GM12878 (cell line): ENCODE measurements at regions of chr13 and their contacts with region 1.

Region 1: GRCh38 chr13:113557013-113557412 is 27.5 kb upstream of the TFDP1 start:
- DNase-seq: no peak
- ATAC-seq: no peak
- H3K4me3 ChIP-seq: no peak overlapping the region
- H3K27ac ChIP-seq: no peak overlapping the region
- H3K4me1 ChIP-seq: no peaks in the 10 kb centered on the region
- H3K27me3 ChIP-seq: no peaks in the 10 kb centered on the region
- CTCF ChIP-seq: no peak
- EP300 ChIP-seq: no peak
- POLR2A ChIP-seq: no peak
- RAD21 ChIP-seq: no peak

Region 2: DNA sequence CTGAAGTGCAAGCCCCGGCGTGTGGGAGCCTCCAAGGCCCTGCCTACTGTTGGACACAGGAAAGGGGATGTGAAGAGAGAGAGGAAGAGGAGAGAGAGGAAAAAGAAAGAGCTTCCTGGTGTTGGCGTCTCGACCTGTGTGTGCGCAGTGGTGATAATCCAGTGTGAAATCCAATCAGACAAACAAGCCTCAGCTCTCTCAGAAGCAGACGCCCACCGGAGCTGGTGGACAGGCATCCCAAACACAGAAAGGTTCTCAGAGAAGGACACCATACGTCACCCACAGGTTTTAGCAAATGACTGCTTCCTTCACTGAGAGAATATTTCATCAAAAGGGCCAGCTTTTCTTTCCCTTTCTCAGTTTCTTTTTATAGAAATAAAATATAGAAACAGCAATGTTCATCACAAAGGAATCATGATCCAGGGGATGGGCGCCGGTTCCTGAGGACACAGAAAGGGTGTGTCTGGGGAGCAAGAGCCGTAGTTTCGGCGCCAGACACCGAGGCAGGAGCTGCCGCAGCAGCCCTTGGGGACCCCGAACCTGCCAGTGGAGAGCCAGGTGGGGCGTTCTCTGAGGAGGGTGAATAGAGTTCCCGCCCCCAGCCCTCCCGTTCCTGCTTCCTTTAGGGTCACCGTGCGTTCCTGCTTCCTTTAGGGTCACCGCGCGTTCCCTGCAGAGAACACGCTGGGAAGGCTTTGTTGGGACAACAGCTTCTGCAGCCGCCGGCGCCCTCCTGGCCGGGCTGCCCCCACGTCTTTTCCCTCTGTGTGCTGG is 1635.9 kb before region 1 on chr13:
- CTCF ChIA-PET with region 1: no interaction called
- POLR2A ChIA-PET with region 1: no interaction called
- RAD21 ChIA-PET with region 1: no interaction called
- SMC1A ChIA-PET with region 1: no interaction called
- in situ Hi-C with region 1: no loop called
- intact Hi-C with region 1: no loop called
- DNase-seq: no peak
- ATAC-seq: no peak
- H3K4me3 ChIP-seq: no peak overlapping the region
- H3K27ac ChIP-seq: no peak overlapping the region
- H3K4me1 ChIP-seq: no peaks in the 10 kb centered on the region
- H3K27me3 ChIP-seq: no peaks in the 10 kb centered on the region
- CTCF ChIP-seq: no peak
- EP300 ChIP-seq: no peak
- POLR2A ChIP-seq: no peak
- RAD21 ChIP-seq: no peak

Region 3: DNA sequence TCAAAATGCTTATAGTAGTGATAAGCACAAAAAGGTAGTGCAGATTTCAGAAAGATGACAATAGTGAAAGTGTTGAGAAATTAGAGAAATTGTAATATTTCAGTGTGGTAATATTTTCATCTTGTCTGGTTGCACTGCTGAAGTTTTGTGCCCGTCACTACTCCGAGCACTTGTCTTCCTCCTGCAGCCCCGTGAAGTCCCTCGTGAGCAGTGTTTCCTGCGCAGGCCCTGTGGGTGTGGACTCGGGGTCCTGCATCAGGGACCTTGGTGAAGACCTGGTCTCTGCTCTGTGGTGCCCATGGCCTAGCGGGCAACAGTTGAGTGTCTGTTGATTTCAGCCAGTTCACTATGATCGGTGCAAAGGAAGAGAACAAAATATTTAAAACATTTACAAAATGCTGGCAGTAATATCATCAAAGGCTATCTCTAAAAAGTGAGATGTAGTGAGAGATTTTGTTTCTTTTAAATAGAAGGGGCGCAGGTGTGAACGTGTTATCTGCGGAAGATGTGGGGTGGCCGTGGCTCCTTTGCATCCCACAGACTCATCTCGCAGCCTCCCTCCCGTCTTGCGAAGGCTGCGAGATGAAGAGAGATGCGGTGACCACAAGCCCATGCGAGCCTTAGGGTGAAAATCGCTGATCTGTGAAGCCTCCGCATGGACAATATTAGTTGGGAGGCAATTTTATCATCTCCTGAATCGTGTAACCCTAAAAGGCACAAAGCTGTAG is 38.8 kb before region 1 on chr13:
- CTCF ChIA-PET with region 1: no interaction called
- POLR2A ChIA-PET with region 1: no interaction called
- RAD21 ChIA-PET with region 1: no interaction called
- SMC1A ChIA-PET with region 1: no interaction called
- in situ Hi-C with region 1: no loop called
- intact Hi-C with region 1: loop called (anchors 2 kb)
- DNase-seq: no peak
- ATAC-seq: no peak
- H3K4me3 ChIP-seq: no peak overlapping the region
- H3K27ac ChIP-seq: no peak overlapping the region
- H3K4me1 ChIP-seq: no peaks in the 10 kb centered on the region
- H3K27me3 ChIP-seq: no peaks in the 10 kb centered on the region
- CTCF ChIP-seq: no peak
- EP300 ChIP-seq: no peak
- POLR2A ChIP-seq: no peak
- RAD21 ChIP-seq: no peak

Region 4: DNA sequence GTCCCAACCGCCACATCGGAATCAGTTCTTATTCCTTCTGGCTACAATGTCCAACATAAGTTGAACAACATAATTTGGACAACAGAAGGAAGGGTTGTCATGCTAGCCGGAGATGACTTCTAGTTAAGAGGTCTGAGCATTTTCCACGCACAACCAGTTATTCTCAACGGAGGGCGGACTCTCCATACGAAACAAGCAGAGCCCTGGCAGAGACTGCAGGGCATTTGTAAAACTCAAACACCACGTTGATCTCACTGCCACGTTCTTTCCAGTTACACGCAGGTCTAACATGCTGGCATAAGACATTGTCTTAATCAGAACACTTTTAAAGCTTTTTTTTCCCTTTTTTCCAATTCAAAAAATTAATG is 28.2 kb before region 1 on chr13:
- CTCF ChIA-PET with region 1: no interaction called
- POLR2A ChIA-PET with region 1: no interaction called
- RAD21 ChIA-PET with region 1: no interaction called
- SMC1A ChIA-PET with region 1: no interaction called
- in situ Hi-C with region 1: no loop called
- intact Hi-C with region 1: no loop called
- DNase-seq: no peak
- ATAC-seq: no peak
- H3K4me3 ChIP-seq: no peak overlapping the region
- H3K27ac ChIP-seq: no peak overlapping the region
- H3K4me1 ChIP-seq: no peaks in the 10 kb centered on the region
- H3K27me3 ChIP-seq: no peaks in the 10 kb centered on the region
- CTCF ChIP-seq: no peak
- EP300 ChIP-seq: no peak
- POLR2A ChIP-seq: no peak
- RAD21 ChIP-seq: no peak